OCI-LY7 (cell line): ENCODE measurements at regions of chr6 and their contacts with region 1.

Region 1: DNA sequence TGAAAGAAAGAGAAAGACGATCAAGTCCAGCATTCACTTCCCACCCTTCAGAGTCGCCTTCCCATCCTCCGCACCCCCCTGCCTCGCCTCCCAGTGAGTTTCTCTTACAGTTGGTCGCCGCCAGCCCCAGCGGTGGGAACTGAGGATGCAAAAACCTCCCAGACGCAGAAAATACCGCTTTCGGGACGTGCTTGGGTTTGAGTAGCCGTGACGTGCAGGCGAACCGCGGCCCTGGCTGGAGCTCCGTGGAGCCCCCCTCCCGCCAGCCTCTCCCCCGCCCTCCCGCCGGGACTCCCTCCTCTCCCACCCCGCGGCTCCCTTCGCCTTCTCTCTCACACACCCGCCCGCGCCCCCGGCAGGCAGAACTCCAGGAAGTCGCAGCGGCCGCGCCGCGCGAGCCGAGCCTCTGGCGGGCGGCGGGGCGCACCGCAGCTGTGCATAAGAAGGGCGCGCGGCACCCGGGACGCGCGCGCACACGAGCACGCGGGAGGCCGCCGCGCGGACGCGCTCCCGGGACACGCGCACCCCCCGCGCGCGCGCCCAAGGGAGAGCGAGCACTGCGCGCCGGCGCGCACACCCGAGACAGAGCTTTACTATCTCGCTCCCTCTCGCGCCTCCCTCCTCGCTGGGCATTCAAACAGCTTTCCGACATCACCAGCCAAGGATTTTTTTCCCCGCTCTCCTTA is at the start of gene ADGRB3:
- DNase-seq: no peak
- H3K4me3 ChIP-seq: no peak within 1 kb of the TSS
- H3K27ac ChIP-seq: no peak within 1 kb of the TSS
- H3K4me1 ChIP-seq: no peaks in the 10 kb centered on the region
- CTCF ChIP-seq: no peak
- total RNA-seq, gene ADGRB3: not detected in 2 replicates

Region 2: GRCh38 chr6:68967549-68968300 is 332.9 kb after region 1 on chr6:
- CTCF ChIA-PET with region 1: no interaction called
- POLR2A ChIA-PET with region 1: no interaction called
- intact Hi-C with region 1: loop called (anchors 5 kb)
- DNase-seq: peak; percentile 67
- H3K4me3 ChIP-seq: no peak overlapping the region
- H3K27ac ChIP-seq: no peak overlapping the region
- H3K4me1 ChIP-seq: no peaks in the 10 kb centered on the region
- CTCF ChIP-seq: peak; percentile 96